Calu3 (cell line): ENCODE measurements at regions of chr7 and their contacts with region 1.

Region 1: DNA sequence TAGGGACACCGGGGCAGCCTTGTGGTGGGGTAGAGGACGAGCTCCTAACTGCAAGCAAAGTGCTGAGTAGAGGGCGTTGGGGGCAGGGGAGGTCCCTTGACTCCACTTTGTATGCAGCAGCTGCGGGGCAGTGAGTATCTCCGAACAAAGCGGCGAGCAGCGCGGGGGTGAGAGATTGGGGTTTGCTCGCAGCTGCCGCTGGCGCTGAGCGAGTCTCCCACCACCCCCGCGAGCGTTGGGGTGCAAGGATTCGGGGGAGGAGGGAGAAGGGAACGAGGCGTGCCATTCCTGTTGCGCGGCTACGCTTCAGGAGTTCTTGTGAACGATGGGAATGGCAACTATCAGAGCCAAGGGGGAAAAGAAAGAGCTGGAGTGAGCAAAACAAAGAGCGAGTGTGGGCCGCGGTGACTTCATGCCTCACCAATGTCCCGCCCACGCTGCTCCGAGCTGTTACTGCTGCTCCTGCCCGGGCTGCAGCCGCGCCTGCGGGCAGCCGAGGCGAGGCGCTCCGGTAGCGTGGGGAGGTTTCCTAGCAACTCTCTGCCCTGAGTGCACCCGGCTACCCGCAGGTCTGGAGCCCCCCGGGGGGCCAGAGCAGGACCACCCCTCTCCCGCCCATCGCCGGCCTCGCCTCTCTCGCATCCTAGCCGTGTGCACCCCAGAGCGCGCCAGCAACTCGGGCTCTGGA is at the start of gene ITGB8:
- DNase-seq: peak; percentile 93
- H3K4me3 Mint-ChIP-seq: peak within 1 kb of the TSS; percentile 93
- H3K27ac Mint-ChIP-seq: peak within 1 kb of the TSS; percentile 98
- H3K4me1 Mint-ChIP-seq: peaks cover 21% of the 10 kb centered on the region
- H3K27me3 Mint-ChIP-seq: no peaks in the 10 kb centered on the region
- CTCF ChIP-seq: no peak
- total RNA-seq, gene ITGB8: 157 and 183 TPM in 2 replicates

Region 2: DNA sequence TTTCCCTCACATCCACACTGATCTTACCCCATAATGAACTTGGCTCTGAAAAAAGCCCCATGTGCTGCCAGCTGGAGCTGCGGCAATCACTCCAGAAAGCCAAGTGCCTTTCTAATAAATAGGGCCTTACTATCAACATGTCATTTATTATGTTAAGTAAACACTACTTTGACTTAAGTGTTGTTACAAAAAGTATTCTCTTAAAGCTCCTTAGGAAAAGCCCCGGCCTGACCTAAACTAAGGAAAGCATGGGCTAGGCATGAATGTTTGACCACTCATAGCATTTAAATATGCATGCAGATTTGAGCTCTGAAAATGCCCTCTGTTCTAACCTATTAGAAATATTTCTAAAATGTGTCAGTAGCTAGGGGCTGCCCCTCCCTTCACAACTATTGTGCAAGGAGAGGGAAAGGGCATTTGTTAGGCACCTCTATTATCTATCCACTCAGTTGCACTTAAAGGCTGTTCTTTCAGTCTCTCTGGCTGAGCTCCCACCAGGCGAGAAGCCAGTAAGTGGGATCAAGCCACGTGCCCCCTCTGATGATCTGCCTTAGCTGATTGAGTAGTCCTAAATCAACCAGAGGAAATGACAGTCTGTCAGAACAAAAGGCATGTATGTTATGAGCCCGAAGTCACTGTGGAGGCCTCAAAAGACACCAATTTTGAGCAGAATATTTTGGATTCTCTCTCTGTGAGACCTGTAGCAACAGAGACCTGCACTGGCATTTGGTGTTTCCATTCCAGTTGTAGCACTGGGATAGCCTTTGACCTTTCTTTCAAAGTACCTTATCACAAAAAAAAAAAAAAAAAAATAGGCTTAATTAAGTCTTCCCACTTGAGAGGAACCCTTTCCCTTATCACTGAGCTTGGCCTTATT is 77.4 kb after region 1 on chr7:
- CTCF ChIA-PET with region 1: interaction called, 4 read pairs
- intact Hi-C with region 1: loop called (anchors 1 kb)
- DNase-seq: peak; percentile 77
- H3K4me3 Mint-ChIP-seq: peak overlapping the region; percentile 22
- H3K27ac Mint-ChIP-seq: peak overlapping the region; percentile 83
- H3K4me1 Mint-ChIP-seq: peaks cover 52% of the 10 kb centered on the region
- H3K27me3 Mint-ChIP-seq: no peaks in the 10 kb centered on the region
- CTCF ChIP-seq: no peak